CD4-positive, alpha-beta memory T cell (primary cell): ENCODE measurements at regions of chr18 and their contacts with region 1.

Region 1: GRCh38 chr18:31954349-31954748 is 11.4 kb upstream of the TRAPPC8 start:
- DNase-seq: no peak
- H3K4me3 ChIP-seq: no peak overlapping the region
- H3K4me3 Mint-ChIP-seq: no peak overlapping the region
- H3K27ac ChIP-seq: no peak overlapping the region
- H3K27ac Mint-ChIP-seq: no peak overlapping the region
- H3K4me1 ChIP-seq: no peaks in the 10 kb centered on the region
- H3K4me1 Mint-ChIP-seq: peaks cover 0 to 1% (median 0%) of the 10 kb centered on the region in 4 donors
- H3K27me3 ChIP-seq: no peaks in the 10 kb centered on the region
- H3K27me3 Mint-ChIP-seq: peaks cover 2 to 6% of the 10 kb centered on the region in 2 donors

Region 2: GRCh38 chr18:31516432-31516831 is 437.9 kb before region 1 on chr18:
- CTCF ChIA-PET with region 1: no interaction called
- POLR2A ChIA-PET with region 1: no interaction called
- intact Hi-C with region 1: no loop called
- DNase-seq: no peak
- H3K4me3 ChIP-seq: no peak overlapping the region
- H3K4me3 Mint-ChIP-seq: no peak overlapping the region
- H3K27ac ChIP-seq: no peak overlapping the region
- H3K27ac Mint-ChIP-seq: no peak overlapping the region
- H3K4me1 ChIP-seq: no peaks in the 10 kb centered on the region
- H3K4me1 Mint-ChIP-seq: no peaks in the 10 kb centered on the region
- H3K27me3 ChIP-seq: no peaks in the 10 kb centered on the region
- H3K27me3 Mint-ChIP-seq: no peaks in the 10 kb centered on the region

Region 3: GRCh38 chr18:31819106-31819924 is 135.0 kb before region 1 on chr18:
- CTCF ChIA-PET with region 1: interaction called, 4 read pairs
- POLR2A ChIA-PET with region 1: no interaction called
- intact Hi-C with region 1: loop called (anchors 1 kb)
- DNase-seq: peak in 4 of 5 donors; percentile 10 to 29 (median 21)
- H3K4me3 ChIP-seq: no peak overlapping the region
- H3K4me3 Mint-ChIP-seq: no peak overlapping the region
- H3K27ac ChIP-seq: no peak overlapping the region
- H3K27ac Mint-ChIP-seq: no peak overlapping the region
- H3K4me1 ChIP-seq: no peaks in the 10 kb centered on the region
- H3K4me1 Mint-ChIP-seq: no peaks in the 10 kb centered on the region
- H3K27me3 ChIP-seq: no peaks in the 10 kb centered on the region
- H3K27me3 Mint-ChIP-seq: no peaks in the 10 kb centered on the region

Region 4: DNA sequence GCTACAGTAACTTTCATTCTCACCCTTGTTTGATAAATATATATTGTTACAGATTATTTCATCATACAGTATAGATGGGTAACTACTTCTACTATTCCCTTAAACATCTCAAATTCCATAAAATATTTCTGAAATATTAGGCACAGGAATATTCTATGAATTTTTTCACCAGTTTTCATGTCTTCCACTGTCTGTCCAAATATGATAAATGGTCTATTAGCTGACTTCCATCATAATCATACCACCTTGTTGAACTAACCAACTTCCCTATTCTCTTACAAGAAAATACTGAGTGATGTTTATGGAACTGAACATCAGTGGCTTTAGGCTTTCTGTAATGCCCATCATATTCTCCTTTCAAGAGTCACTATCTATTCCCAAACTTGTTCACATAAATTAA is 93.9 kb before region 1 on chr18:
- CTCF ChIA-PET with region 1: interaction called, 5 read pairs
- POLR2A ChIA-PET with region 1: no interaction called
- intact Hi-C with region 1: loop called (anchors 10 kb)
- DNase-seq: no peak
- H3K4me3 ChIP-seq: no peak overlapping the region
- H3K4me3 Mint-ChIP-seq: no peak overlapping the region
- H3K27ac ChIP-seq: no peak overlapping the region
- H3K27ac Mint-ChIP-seq: no peak overlapping the region
- H3K4me1 ChIP-seq: no peaks in the 10 kb centered on the region
- H3K4me1 Mint-ChIP-seq: no peaks in the 10 kb centered on the region
- H3K27me3 ChIP-seq: no peaks in the 10 kb centered on the region
- H3K27me3 Mint-ChIP-seq: no peaks in the 10 kb centered on the region

Region 5: DNA sequence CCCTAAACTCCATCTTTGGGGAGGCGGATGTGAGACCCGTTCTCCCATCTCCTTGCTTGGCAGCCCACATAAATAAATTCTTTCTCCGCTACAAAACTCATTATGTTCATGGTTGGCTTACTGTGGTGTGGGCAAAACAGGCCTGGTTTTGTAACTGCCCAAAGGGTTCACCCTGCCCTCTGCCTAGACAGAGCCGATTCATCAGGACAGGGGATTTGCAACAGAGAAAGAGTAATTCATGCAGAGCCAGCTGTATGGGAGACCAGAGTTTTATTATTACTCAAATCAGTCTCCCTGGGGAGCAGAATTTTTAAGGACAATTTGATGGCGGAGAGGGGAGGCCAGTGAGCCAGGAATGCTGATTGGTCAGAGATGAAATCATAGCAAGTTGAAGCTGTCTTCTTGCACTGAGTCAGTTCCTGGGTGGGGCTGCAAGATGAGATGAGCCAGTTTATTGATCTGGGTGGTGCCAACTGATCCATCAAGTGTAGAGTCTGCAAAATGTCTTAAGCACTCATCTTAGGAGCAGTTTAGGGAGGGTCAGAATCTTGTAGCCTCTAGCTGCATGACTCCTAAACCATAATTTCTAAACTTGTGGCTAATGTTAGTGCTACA is 55.9 kb after region 1 on chr18:
- CTCF ChIA-PET with region 1: no interaction called
- POLR2A ChIA-PET with region 1: no interaction called
- intact Hi-C with region 1: no loop called
- DNase-seq: no peak
- H3K4me3 ChIP-seq: no peak overlapping the region
- H3K4me3 Mint-ChIP-seq: no peak overlapping the region
- H3K27ac ChIP-seq: no peak overlapping the region
- H3K27ac Mint-ChIP-seq: peak overlapping the region in 3 of 7 donors; percentile 35 to 43 (median 37)
- H3K4me1 ChIP-seq: peaks cover 9% of the 10 kb centered on the region
- H3K4me1 Mint-ChIP-seq: peaks cover 9 to 23% (median 10%) of the 10 kb centered on the region in 4 donors
- H3K27me3 ChIP-seq: no peaks in the 10 kb centered on the region
- H3K27me3 Mint-ChIP-seq: no peaks in the 10 kb centered on the region

Region 6: GRCh38 chr18:32138332-32138982 is 184.1 kb after region 1 on chr18:
- CTCF ChIA-PET with region 1: no interaction called
- POLR2A ChIA-PET with region 1: no interaction called
- intact Hi-C with region 1: no loop called
- DNase-seq: no peak
- H3K4me3 ChIP-seq: no peak overlapping the region
- H3K4me3 Mint-ChIP-seq: no peak overlapping the region
- H3K27ac ChIP-seq: no peak overlapping the region
- H3K27ac Mint-ChIP-seq: peak overlapping the region in 2 of 7 donors; percentile 25 to 77
- H3K4me1 ChIP-seq: peaks cover 6% of the 10 kb centered on the region
- H3K4me1 Mint-ChIP-seq: peaks cover 4 to 11% (median 5%) of the 10 kb centered on the region in 4 donors
- H3K27me3 ChIP-seq: no peaks in the 10 kb centered on the region
- H3K27me3 Mint-ChIP-seq: no peaks in the 10 kb centered on the region